CD4-positive, alpha-beta T cell (primary cell): ENCODE measurements at regions of chr11 and their contacts with region 1.

Region 1: GRCh38 chr11:110199184-110199941 is 97.1 kb downstream of the RDX start:
- DNase-seq: no peak
- ATAC-seq: no peak
- H3K4me3 ChIP-seq: no peak overlapping the region
- H3K4me3 Mint-ChIP-seq: no peak overlapping the region
- H3K27ac ChIP-seq: no peak overlapping the region
- H3K27ac Mint-ChIP-seq: no peak overlapping the region
- H3K4me1 ChIP-seq: no peaks in the 10 kb centered on the region
- H3K4me1 Mint-ChIP-seq: no peaks in the 10 kb centered on the region
- H3K27me3 ChIP-seq: no peaks in the 10 kb centered on the region
- H3K27me3 Mint-ChIP-seq: no peaks in the 10 kb centered on the region
- CTCF ChIP-seq: no peak

Region 2: GRCh38 chr11:110251837-110252236 is 52.5 kb after region 1 on chr11:
- CTCF ChIA-PET with region 1: interaction called, 5 read pairs
- POLR2A ChIA-PET with region 1: interaction called, 3 read pairs
- intact Hi-C with region 1: loop called (anchors 2 to 5 kb)
- DNase-seq: no peak
- ATAC-seq: no peak
- H3K4me3 ChIP-seq: no peak overlapping the region
- H3K4me3 Mint-ChIP-seq: no peak overlapping the region
- H3K27ac ChIP-seq: no peak overlapping the region
- H3K27ac Mint-ChIP-seq: no peak overlapping the region
- H3K4me1 ChIP-seq: no peaks in the 10 kb centered on the region
- H3K4me1 Mint-ChIP-seq: no peaks in the 10 kb centered on the region
- H3K27me3 ChIP-seq: no peaks in the 10 kb centered on the region
- H3K27me3 Mint-ChIP-seq: no peaks in the 10 kb centered on the region
- CTCF ChIP-seq: no peak

Region 3: GRCh38 chr11:110296226-110297075 is 97.1 kb after region 1 on chr11 and contains the start of gene RDX:
- CTCF ChIA-PET with region 1: interaction called, 4 read pairs
- POLR2A ChIA-PET with region 1: no interaction called
- intact Hi-C with region 1: loop called in 1 of 2 experiments (anchors 5 kb)
- DNase-seq: peak; percentile 9 to 86 (median 44)
- ATAC-seq: peak; percentile 65
- H3K4me3 ChIP-seq: peak within 1 kb of the TSS; percentile 79
- H3K4me3 Mint-ChIP-seq: peak within 1 kb of the TSS; percentile 91
- H3K27ac ChIP-seq: no peak within 1 kb of the TSS
- H3K27ac Mint-ChIP-seq: peak within 1 kb of the TSS; percentile 63
- H3K4me1 ChIP-seq: peaks cover 20% of the 10 kb centered on the region
- H3K4me1 Mint-ChIP-seq: peaks cover 37% of the 10 kb centered on the region
- H3K27me3 ChIP-seq: no peaks in the 10 kb centered on the region
- H3K27me3 Mint-ChIP-seq: no peaks in the 10 kb centered on the region
- CTCF ChIP-seq: no peak
- total RNA-seq, gene RDX: 11.4 to 14.2 TPM

Region 4: DNA sequence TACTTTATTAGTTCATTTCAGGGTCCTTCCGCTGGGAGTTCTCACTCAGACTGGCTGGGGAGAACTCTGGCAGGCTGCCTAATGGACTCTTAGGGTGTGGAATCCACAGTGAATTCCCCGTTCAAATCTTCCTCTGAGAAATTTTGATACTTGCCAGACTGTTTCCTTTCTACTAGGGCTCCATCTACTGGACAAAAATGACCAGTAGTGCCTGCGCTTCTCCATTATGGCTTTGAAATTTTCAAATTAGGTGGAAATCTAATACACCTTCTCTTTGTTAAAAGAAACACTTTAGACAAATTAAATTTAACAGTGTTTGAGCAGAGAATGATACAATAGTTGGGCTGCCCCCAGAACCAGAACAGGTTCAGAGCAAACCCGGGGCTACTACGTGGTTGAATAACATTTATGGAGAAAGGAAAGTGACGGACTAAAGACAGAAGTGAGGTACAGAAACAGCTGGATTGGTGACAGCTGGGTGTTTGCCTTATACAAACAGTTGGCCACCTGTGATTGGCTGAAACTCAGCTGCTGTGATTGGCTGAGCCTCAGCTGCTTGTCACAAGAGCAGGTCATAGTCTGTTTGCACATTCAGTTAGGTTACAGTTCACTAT is 177.5 kb after region 1 on chr11:
- CTCF ChIA-PET with region 1: interaction called, 5 read pairs
- POLR2A ChIA-PET with region 1: no interaction called
- intact Hi-C with region 1: loop called (anchors 1 to 2 kb)
- DNase-seq: peak in 5 of 14 experiments; percentile 3 to 70 (median 54)
- ATAC-seq: peak; percentile 57
- H3K4me3 ChIP-seq: no peak overlapping the region
- H3K4me3 Mint-ChIP-seq: no peak overlapping the region
- H3K27ac ChIP-seq: no peak overlapping the region
- H3K27ac Mint-ChIP-seq: no peak overlapping the region
- H3K4me1 ChIP-seq: no peaks in the 10 kb centered on the region
- H3K4me1 Mint-ChIP-seq: peaks cover 6% of the 10 kb centered on the region
- H3K27me3 ChIP-seq: no peaks in the 10 kb centered on the region
- H3K27me3 Mint-ChIP-seq: no peaks in the 10 kb centered on the region
- CTCF ChIP-seq: peak; percentile 77

Region 5: DNA sequence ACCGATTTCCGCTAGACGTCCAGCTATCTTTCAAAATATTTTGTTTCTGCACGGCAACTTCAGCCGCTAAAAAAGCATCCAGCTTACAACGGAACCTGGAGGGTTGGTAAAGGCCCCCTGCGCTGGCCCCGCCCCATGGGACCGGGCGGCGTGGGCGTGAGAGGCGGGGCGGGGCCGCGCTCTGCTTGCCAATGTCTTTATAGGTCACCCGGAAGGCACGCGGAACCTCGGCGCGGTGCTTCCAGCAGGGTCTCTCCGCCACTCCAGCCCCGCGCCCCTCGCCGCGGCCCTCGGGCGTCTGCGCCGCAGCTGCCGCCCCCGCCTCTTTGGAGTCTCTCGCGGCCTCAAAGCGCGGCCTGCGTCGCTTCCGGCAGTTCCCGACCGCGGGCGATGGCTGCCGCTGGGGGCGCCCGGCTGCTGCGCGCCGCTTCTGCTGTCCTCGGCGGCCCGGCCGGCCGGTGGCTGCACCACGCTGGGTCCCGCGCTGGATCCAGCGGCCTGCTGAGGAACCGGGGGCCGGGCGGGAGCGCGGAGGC is 230.4 kb after region 1 on chr11 and contains the start of gene FDX1:
- CTCF ChIA-PET with region 1: interaction called, 23 read pairs
- POLR2A ChIA-PET with region 1: interaction called, 8 read pairs
- intact Hi-C with region 1: loop called (anchors 1 kb)
- DNase-seq: peak; percentile 59 to 92 (median 74)
- ATAC-seq: peak; percentile 80
- H3K4me3 ChIP-seq: peak within 1 kb of the TSS; percentile 95
- H3K4me3 Mint-ChIP-seq: peak within 1 kb of the TSS; percentile 89
- H3K27ac ChIP-seq: peak within 1 kb of the TSS; percentile 73 to 84
- H3K27ac Mint-ChIP-seq: peak within 1 kb of the TSS; percentile 94
- H3K4me1 ChIP-seq: peaks cover 26% of the 10 kb centered on the region
- H3K4me1 Mint-ChIP-seq: peaks cover 50% of the 10 kb centered on the region
- H3K27me3 ChIP-seq: no peaks in the 10 kb centered on the region
- H3K27me3 Mint-ChIP-seq: no peaks in the 10 kb centered on the region
- CTCF ChIP-seq: peak; percentile 32
- total RNA-seq, gene FDX1: 10.2 to 10.6 TPM

Region 6: DNA sequence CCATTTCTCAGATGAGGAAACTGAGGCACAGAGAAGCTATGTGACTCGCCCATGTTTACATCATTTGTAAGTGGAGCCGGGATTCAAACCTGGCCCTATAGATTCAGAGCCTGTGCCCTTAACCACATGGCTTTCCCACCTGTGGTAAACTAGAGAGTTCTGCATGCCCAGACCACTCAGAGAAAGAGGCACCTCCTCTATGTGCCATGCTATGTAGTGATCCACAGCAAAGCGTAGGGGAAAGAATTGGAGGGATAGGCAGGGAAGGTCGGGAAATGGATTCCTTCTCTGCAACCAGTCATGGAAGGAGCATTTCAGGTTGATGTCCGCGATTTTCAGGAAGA is 1030.7 kb after region 1 on chr11:
- CTCF ChIA-PET with region 1: interaction called, 3 read pairs
- POLR2A ChIA-PET with region 1: no interaction called
- intact Hi-C with region 1: loop called in 1 of 2 experiments (anchors 2 kb)
- DNase-seq: no peak
- ATAC-seq: peak; percentile 56
- H3K4me3 ChIP-seq: no peak overlapping the region
- H3K4me3 Mint-ChIP-seq: peak overlapping the region; percentile 56
- H3K27ac ChIP-seq: no peak overlapping the region
- H3K27ac Mint-ChIP-seq: no peak overlapping the region
- H3K4me1 ChIP-seq: peaks cover 18% of the 10 kb centered on the region
- H3K4me1 Mint-ChIP-seq: peaks cover 19% of the 10 kb centered on the region
- H3K27me3 ChIP-seq: peaks cover 0 to 7% of the 10 kb centered on the region in 2 experiments
- H3K27me3 Mint-ChIP-seq: peaks cover 14% of the 10 kb centered on the region
- CTCF ChIP-seq: no peak

Region 7: GRCh38 chr11:111446404-111447111 is 1247.2 kb after region 1 on chr11:
- CTCF ChIA-PET with region 1: no interaction called
- POLR2A ChIA-PET with region 1: no interaction called
- intact Hi-C with region 1: loop called in 1 of 2 experiments (anchors 10 kb)
- DNase-seq: peak; percentile 45 to 95 (median 70)
- ATAC-seq: peak; percentile 98
- H3K4me3 ChIP-seq: no peak overlapping the region
- H3K4me3 Mint-ChIP-seq: peak overlapping the region; percentile 34
- H3K27ac ChIP-seq: peak overlapping the region in 1 of 2 donors; percentile 12
- H3K27ac Mint-ChIP-seq: peak overlapping the region; percentile 58
- H3K4me1 ChIP-seq: peaks cover 15% of the 10 kb centered on the region
- H3K4me1 Mint-ChIP-seq: peaks cover 14% of the 10 kb centered on the region
- H3K27me3 ChIP-seq: no peaks in the 10 kb centered on the region
- H3K27me3 Mint-ChIP-seq: no peaks in the 10 kb centered on the region
- CTCF ChIP-seq: peak; percentile 64